B cell (primary cell): ENCODE measurements at regions of chr17 and their contacts with region 1.

Region 1: GRCh38 chr17:35088881-35089585 is 25.5 kb upstream of the RFFL start:
- DNase-seq: peak; percentile 92
- ATAC-seq: peak; percentile 84
- H3K4me3 ChIP-seq: peak overlapping the region; percentile 48 to 86 (median 76)
- H3K4me3 Mint-ChIP-seq: peak overlapping the region; percentile 94
- H3K27ac ChIP-seq: peak overlapping the region; percentile 91 to 92
- H3K27ac Mint-ChIP-seq: peak overlapping the region; percentile 94
- H3K4me1 ChIP-seq: peaks cover 17 to 21% of the 10 kb centered on the region in 2 donors
- H3K4me1 Mint-ChIP-seq: peaks cover 36% of the 10 kb centered on the region
- H3K27me3 ChIP-seq: no peaks in the 10 kb centered on the region
- H3K27me3 Mint-ChIP-seq: no peaks in the 10 kb centered on the region
- CTCF ChIP-seq: peak; percentile 73

Region 2: GRCh38 chr17:34961093-34961911 is 127.7 kb before region 1 on chr17 and contains the starts of genes CCT6B and ZNF830:
- CTCF ChIA-PET with region 1: interaction called, 3 read pairs
- POLR2A ChIA-PET with region 1: interaction called, 3 read pairs
- intact Hi-C with region 1: loop called (anchors 1 kb)
- DNase-seq: peak; percentile 95
- ATAC-seq: peak; percentile 90
- H3K4me3 ChIP-seq: peak within 1 kb of the TSS; percentile 72 to 98 (median 88)
- H3K4me3 Mint-ChIP-seq: peak within 1 kb of the TSS; percentile 99
- H3K27ac ChIP-seq: peak within 1 kb of the TSS; percentile 85 to 92
- H3K27ac Mint-ChIP-seq: peak within 1 kb of the TSS; percentile 99
- H3K4me1 ChIP-seq: peaks cover 13 to 17% of the 10 kb centered on the region in 2 donors
- H3K4me1 Mint-ChIP-seq: peaks cover 25% of the 10 kb centered on the region
- H3K27me3 ChIP-seq: peaks cover 0 to 7% (median 0%) of the 10 kb centered on the region in 4 experiments
- H3K27me3 Mint-ChIP-seq: peaks cover 10% of the 10 kb centered on the region
- CTCF ChIP-seq: no peak
- total RNA-seq, gene CCT6B: 2.6 and 2.8 TPM in 2 replicates
- total RNA-seq, gene ZNF830: 44.6 and 45.4 TPM in 2 replicates

Region 3: GRCh38 chr17:34998205-34998604 is 90.8 kb before region 1 on chr17:
- CTCF ChIA-PET with region 1: interaction called, 70 read pairs
- POLR2A ChIA-PET with region 1: interaction called, 3 read pairs
- intact Hi-C with region 1: loop called (anchors 1 kb)
- DNase-seq: peak; percentile 78
- ATAC-seq: peak; percentile 97
- H3K4me3 ChIP-seq: no peak overlapping the region
- H3K4me3 Mint-ChIP-seq: no peak overlapping the region
- H3K27ac ChIP-seq: no peak overlapping the region
- H3K27ac Mint-ChIP-seq: peak overlapping the region; percentile 70
- H3K4me1 ChIP-seq: no peaks in the 10 kb centered on the region
- H3K4me1 Mint-ChIP-seq: peaks cover 3% of the 10 kb centered on the region
- H3K27me3 ChIP-seq: no peaks in the 10 kb centered on the region
- H3K27me3 Mint-ChIP-seq: no peaks in the 10 kb centered on the region
- CTCF ChIP-seq: peak; percentile 84

Region 4: DNA sequence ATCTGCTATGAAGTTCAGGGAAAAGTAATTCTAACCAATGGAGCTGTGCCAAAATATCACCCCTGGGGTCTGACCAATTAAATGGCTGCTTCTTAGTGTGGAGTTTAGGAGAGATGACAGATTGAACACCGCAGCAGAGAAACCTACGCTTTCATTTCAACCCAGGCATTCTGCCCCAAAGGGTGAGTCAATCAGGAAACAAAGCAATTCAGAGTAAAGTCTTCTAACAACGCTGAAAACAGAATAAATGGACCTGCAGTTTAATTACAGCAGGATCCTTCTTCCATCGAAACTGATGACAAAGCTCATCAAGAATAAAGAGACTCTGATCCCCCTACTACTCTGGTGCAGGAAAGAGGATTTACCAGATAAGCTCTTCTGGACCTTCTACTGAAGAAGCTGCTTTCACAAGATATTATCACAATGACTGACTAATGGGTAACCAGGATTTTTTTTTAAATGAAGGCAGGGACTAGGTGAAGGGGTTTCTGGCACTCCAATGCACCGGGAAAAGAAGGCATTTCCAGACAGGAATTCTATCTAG is 42.2 kb before region 1 on chr17:
- CTCF ChIA-PET with region 1: interaction called, 4 read pairs
- POLR2A ChIA-PET with region 1: no interaction called
- intact Hi-C with region 1: loop called (anchors 2 kb)
- DNase-seq: peak; percentile 44
- ATAC-seq: peak; percentile 44
- H3K4me3 ChIP-seq: peak overlapping the region in 2 of 5 experiments; percentile 0 to 1
- H3K4me3 Mint-ChIP-seq: peak overlapping the region; percentile 68
- H3K27ac ChIP-seq: peak overlapping the region in 1 of 2 donors; percentile 23
- H3K27ac Mint-ChIP-seq: peak overlapping the region; percentile 57
- H3K4me1 ChIP-seq: peaks cover 39 to 52% of the 10 kb centered on the region in 2 donors
- H3K4me1 Mint-ChIP-seq: peaks cover 48% of the 10 kb centered on the region
- H3K27me3 ChIP-seq: no peaks in the 10 kb centered on the region
- H3K27me3 Mint-ChIP-seq: no peaks in the 10 kb centered on the region
- CTCF ChIP-seq: no peak

Region 5: DNA sequence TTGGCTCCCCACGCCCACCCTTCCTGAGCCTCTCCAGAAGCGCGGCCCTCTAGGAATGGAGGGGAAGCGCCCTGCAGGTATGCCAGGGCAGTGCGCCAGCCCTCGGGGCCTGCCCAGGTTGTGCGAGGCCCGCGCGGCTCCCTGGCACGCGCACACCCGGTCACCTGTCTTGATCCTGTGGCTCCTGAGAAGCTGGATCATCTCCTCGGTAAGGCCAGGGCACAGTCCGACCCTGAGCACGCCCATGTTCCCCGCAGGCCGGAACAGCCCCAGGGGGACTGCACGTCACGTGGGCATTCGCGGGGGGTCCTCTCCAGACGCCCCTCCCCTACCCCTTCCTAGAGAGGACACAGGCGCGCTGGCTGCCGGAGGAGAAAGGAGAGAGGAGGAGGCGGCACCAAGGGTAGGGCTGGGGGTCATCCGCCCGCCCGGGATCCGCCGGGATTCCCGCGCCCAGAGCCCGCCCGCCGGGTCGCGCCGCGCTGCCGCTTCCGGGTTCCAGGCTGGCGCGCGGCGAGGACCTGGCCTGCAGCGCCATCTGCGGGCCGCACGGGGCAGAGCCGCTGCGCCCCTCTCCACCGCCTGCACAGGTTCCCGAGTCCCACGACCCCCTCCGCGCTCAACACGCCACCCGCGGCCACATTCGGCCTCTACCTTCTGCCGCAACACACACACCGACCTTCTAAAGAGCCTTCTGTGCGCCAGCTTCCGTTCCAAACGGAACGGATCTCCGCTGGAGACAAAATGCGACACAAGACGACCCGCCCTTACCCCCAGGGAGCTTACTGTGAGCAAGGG is 30.5 kb after region 1 on chr17 and contains the start of gene RAD51D:
- CTCF ChIA-PET with region 1: interaction called, 17 read pairs
- POLR2A ChIA-PET with region 1: interaction called, 6 read pairs
- intact Hi-C with region 1: loop called (anchors 1 kb)
- DNase-seq: peak; percentile 91
- ATAC-seq: peak; percentile 90
- H3K4me3 ChIP-seq: peak within 1 kb of the TSS; percentile 58 to 96 (median 90)
- H3K4me3 Mint-ChIP-seq: peak within 1 kb of the TSS; percentile 93
- H3K27ac ChIP-seq: peak within 1 kb of the TSS; percentile 73 to 85
- H3K27ac Mint-ChIP-seq: peak within 1 kb of the TSS; percentile 90
- H3K4me1 ChIP-seq: peaks cover 16 to 18% of the 10 kb centered on the region in 2 donors
- H3K4me1 Mint-ChIP-seq: peaks cover 27% of the 10 kb centered on the region
- H3K27me3 ChIP-seq: no peaks in the 10 kb centered on the region
- H3K27me3 Mint-ChIP-seq: no peaks in the 10 kb centered on the region
- CTCF ChIP-seq: peak; percentile 94
- total RNA-seq, gene RAD51D: 29.4 and 31.2 TPM in 2 replicates

Region 6: DNA sequence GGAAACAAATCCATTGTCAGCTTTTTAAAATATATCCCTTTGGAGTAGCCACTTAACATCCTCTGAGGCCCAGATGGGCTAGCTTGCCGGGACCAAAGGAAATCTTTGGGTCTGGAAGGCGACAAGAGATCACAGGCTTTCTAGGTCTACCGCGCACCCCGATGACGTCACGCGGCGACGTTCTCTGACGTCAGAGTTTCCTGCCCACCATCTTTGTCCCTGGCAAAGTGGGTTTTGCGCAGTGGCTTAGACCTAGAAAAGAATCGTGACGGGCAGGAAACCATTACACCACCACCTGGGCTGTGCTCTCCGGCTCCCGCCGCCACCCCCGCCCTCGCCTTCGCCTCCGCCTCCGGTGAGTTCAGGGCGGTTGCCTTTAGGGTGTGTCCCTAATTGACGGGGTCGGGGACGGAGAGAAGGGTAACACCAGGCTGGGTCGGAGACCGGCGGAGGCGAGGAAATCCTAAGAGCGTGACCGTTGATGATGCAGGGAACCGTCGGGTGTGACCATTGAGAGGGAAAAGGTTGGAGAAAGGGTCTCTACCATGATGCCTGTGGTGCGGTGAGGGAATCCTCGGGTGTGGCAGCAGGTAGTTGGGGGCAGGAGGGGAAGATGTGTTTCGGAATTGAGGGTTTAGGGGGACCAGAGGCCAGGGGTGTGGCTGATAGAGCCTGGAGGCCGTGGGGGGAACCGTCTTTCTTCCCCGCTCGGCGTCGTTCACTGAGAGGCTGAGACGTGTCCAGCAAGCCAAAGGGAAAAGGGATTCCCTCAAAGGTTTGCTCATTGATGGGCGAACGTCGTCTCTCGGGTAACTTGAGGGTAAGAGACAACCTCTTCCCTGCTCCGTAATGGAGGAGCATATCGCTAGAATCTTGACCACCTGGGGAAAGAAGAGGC is 498.3 kb after region 1 on chr17 and contains the start of gene AP2B1:
- CTCF ChIA-PET with region 1: no interaction called
- POLR2A ChIA-PET with region 1: no interaction called
- intact Hi-C with region 1: loop called (anchors 2 kb)
- DNase-seq: peak; percentile 99
- ATAC-seq: peak; percentile 98
- H3K4me3 ChIP-seq: peak within 1 kb of the TSS; percentile 59 to 100 (median 90)
- H3K4me3 Mint-ChIP-seq: peak within 1 kb of the TSS; percentile 92
- H3K27ac ChIP-seq: peak within 1 kb of the TSS; percentile 83 to 89
- H3K27ac Mint-ChIP-seq: peak within 1 kb of the TSS; percentile 95
- H3K4me1 ChIP-seq: peaks cover 11 to 19% of the 10 kb centered on the region in 2 donors
- H3K4me1 Mint-ChIP-seq: peaks cover 33% of the 10 kb centered on the region
- H3K27me3 ChIP-seq: no peaks in the 10 kb centered on the region
- H3K27me3 Mint-ChIP-seq: peaks cover 7% of the 10 kb centered on the region
- CTCF ChIP-seq: no peak
- total RNA-seq, gene AP2B1: 120 and 123 TPM in 2 replicates